Activated CD4-positive, alpha-beta T cell treated with anti-CD3 and anti-CD28 coated beads for 36 hours (primary cell): ENCODE measurements at regions of chr1 and their contacts with region 1.

Region 1: DNA sequence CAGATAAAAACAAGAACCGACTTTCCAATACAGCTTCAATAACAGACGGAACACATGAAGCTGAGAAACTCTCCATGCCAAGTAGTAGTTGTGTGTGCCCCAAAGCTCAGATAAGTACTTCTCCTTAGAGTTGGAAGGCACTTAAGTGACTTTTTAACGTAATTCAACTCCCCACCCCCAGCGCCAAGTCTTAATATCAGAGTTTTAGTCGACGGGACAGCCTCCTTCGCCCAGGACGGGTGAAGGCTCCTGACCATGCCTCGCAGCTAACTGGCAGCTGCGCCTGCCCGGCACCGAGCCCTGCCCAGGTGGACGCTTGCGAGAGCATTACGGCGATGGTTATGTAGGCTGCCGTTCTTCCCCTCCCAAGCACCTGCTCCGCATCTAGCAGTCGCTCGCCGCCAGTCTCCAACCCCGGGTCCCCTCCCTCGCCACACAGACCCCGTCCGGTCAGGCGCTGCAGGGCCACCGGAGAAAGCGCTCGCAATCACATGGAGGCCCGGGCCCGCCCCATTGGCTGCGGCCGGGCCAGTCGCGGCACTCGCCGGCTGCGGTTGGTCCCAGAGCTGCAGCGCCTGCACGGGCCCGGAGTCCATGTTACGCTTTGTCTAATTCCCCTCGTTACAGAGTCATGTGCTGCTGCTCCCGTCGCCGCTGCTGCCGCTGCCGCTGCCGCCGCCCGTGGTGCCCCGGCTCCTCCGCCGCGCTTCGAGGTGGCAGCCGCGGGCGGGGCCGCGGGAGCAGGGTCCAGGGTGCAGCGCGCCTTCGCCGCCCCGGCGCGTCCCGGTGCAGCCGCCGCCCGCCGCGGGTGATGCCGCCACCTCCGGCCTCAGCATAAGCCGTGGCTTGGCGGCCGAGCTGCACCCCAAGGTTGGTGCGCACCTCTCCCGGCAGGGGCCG is at the start of gene LRRC8D:
- DNase-seq: peak; percentile 83
- ATAC-seq: peak; percentile 84
- H3K4me3 Mint-ChIP-seq: peak within 1 kb of the TSS; percentile 82
- H3K27ac Mint-ChIP-seq: peak within 1 kb of the TSS; percentile 69
- H3K4me1 Mint-ChIP-seq: peaks cover 34% of the 10 kb centered on the region
- H3K27me3 Mint-ChIP-seq: no peaks in the 10 kb centered on the region
- total RNA-seq, gene LRRC8D: 24.3 to 30.0 TPM

Region 2: GRCh38 chr1:89994805-89995597 is 174.3 kb after region 1 on chr1 and contains the start of gene ZNF326:
- CTCF ChIA-PET with region 1: interaction called, 3 read pairs
- POLR2A ChIA-PET with region 1: no interaction called
- intact Hi-C with region 1: loop called (anchors 1 to 2 kb)
- DNase-seq: peak; percentile 97
- ATAC-seq: peak; percentile 95
- H3K4me3 Mint-ChIP-seq: peak within 1 kb of the TSS; percentile 94
- H3K27ac Mint-ChIP-seq: peak within 1 kb of the TSS; percentile 92
- H3K4me1 Mint-ChIP-seq: peaks cover 42% of the 10 kb centered on the region
- H3K27me3 Mint-ChIP-seq: no peaks in the 10 kb centered on the region
- total RNA-seq, gene ZNF326: 19.4 to 20.5 TPM

Region 3: DNA sequence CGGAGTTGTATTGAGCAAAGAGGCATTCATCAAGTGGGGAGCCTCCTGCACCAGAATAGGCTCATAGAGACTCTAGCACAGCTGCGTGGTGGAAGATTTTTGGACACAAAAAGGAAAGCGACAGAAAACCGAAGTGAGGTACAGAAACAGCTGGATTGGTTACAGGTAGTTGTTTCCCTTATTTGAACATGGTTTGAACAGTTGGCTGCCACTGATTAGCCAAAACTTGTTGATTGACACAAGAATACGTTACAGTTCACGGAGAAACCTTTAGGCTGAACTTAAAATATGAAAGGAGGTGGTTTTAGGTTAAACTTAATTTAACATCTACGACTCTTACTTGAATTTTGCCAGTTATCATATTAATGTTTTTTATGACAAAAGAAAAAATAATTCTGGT is 263.3 kb after region 1 on chr1:
- CTCF ChIA-PET with region 1: no interaction called
- POLR2A ChIA-PET with region 1: no interaction called
- intact Hi-C with region 1: no loop called
- DNase-seq: no peak
- ATAC-seq: no peak
- H3K4me3 Mint-ChIP-seq: no peak overlapping the region
- H3K27ac Mint-ChIP-seq: no peak overlapping the region
- H3K4me1 Mint-ChIP-seq: no peaks in the 10 kb centered on the region
- H3K27me3 Mint-ChIP-seq: peaks cover 17% of the 10 kb centered on the region

Region 4: DNA sequence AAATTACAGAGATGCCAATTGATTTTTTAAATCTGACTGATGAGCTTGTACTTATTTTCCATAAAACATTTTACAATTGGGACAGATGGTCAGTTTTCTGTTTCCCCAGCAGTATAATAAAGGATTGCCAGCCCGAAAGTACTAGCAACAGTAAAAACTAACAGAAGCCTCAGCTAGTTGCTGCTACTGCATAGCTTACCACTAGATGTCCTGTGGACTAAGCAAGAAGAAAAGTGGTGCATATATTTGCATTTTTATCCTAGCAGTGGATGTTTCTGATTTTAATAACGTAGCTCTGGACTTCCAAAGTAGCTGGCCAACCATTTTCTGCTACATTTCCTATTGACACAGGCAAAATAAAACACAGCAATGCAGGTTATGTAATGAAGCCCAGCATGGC is 655.0 kb after region 1 on chr1:
- CTCF ChIA-PET with region 1: no interaction called
- POLR2A ChIA-PET with region 1: no interaction called
- intact Hi-C with region 1: no loop called
- DNase-seq: no peak
- ATAC-seq: no peak
- H3K4me3 Mint-ChIP-seq: no peak overlapping the region
- H3K27ac Mint-ChIP-seq: no peak overlapping the region
- H3K4me1 Mint-ChIP-seq: no peaks in the 10 kb centered on the region
- H3K27me3 Mint-ChIP-seq: peaks cover 2% of the 10 kb centered on the region

Region 5: DNA sequence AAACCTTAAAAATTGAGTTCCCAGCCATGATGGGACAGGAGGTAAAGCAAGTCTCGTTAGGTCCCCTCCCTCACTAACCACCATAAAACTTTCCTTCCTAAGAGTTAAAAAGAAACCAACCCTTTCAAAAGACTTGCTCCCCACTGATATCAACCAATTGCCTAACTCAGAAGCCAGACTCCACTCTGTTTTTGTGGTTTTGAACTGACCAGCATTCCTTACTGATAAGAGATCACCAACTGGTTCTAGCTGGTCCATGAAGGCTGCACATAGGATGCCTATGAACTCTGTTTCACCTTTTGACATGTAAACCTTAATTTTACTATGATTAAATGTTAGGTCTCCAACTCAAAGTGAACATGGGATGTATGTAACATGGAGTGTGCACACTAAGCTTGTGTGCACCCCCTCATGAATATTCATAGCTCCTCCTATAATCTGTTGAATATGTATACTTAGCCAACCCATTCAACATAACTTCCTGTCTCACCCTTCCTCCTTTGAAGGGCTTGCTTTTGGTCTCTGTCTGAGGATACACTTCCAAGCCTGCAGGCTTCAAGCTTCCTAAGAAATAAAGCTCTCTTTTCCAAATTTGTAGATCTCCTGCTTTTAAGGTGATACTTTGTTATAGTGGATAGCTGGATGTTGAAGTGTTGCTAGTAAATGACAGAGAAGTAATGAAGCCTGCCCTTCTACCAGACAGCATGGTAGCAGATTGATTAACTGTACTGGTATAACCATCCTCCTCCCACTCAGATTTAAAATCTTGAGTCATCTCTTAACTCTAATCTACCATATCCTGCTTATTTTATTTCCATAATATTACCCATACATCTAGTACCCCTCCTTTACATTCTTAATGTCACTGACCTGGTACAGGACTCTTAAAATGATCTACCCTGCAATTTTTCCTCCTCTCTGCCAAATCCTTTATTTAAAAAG is 1105.5 kb after region 1 on chr1:
- CTCF ChIA-PET with region 1: no interaction called
- POLR2A ChIA-PET with region 1: no interaction called
- intact Hi-C with region 1: no loop called
- DNase-seq: no peak
- ATAC-seq: peak; percentile 61
- H3K4me3 Mint-ChIP-seq: no peak overlapping the region
- H3K27ac Mint-ChIP-seq: no peak overlapping the region
- H3K4me1 Mint-ChIP-seq: peaks cover 65% of the 10 kb centered on the region
- H3K27me3 Mint-ChIP-seq: no peaks in the 10 kb centered on the region